SK-N-SH (cell line): ENCODE measurements at regions of chr11 and their contacts with region 1.

Region 1: DNA sequence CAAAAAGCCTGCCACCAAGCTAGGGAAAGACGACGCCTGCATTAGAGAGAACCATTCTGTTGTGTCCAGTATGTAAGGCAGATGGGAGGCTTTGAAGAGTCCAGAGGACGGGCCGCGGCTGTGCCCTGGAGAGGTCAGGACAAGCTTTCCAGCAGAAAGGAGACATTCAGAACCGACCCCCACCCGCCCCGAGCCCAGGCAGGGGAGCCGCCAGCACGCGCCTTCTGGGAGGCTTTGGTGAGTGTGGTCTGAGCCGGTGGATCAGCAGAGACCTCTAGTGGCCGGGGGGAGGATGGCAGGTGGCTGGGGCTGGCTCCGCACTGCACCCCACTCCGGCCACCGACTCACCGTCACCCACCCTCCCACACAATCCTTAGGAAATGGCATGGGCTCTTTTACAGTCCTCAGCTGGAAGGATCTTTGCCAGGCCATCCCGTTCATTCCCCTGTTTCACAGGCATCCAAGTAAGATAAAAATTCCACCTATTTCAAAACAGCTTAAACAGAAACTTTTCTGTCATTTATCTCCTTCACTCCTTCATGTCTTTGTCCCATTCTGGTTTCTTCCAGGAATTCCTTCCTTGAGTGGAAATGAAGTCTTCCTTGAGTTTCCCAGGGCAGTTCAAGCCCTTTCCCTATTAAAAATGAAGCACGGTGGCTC is 91.2 kb downstream of the FEZ1 start:
- DNase-seq: peak; percentile 91
- H3K4me3 ChIP-seq: peak overlapping the region in 1 of 2 experiments; percentile 19; a peak in 1 of 4 replicates
- H3K27ac ChIP-seq: no peak overlapping the region
- H3K4me1 ChIP-seq: peaks cover 0 to under 1% of the 10 kb centered on the region in 2 experiments; a peak in 1 of 4 replicates
- H3K27me3 ChIP-seq: peaks cover 43% of the 10 kb centered on the region; the same call in 1 of the 2 replicates
- CTCF ChIP-seq: peak; percentile 83
- EP300 ChIP-seq: no peak
- RAD21 ChIP-seq: peak; percentile 86

Region 2: DNA sequence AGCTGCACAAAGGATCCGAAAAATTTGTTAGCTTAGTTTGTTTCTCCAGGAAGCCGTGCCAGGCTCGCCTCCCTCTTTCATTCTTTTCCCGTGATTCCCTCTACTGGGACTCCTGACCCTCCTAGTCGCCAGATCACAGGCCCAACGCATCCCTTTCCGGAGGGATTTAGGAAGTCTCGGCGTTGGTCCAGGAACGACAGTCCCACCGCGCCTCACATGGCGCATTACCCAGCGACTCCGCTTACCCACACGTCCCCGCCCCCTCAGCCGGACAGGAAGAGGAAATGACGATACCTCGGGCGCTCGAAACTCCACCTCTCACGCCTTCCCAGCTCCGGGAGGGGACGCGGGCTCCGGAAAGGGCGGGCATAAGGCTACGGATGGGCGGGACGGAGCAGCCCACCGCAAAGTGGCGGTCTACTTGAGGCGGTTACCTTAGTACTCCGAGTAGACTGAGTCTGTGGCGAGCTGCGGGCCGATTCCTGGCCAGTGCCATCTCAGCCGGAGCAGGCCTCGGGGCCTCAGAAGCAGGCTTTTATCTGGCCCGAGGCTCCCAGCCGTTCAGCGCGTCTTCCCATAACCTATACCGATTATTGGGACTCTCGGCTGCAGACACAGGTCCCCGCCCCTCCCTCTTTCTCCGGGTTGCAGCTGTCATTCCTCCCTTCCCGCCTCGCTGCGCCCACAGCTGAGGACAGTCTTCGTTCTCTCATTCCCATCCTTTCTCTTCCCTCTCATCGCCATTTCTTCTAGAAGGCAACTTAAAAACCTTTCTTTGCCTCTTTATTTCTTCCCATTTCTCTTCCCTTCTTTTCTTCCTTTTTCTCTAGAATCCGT is 450.9 kb before region 1 on chr11 and contains the start of gene CCDC15:
- CTCF ChIA-PET with region 1: interaction called, 11 read pairs
- POLR2A ChIA-PET with region 1: no interaction called
- DNase-seq: peak; percentile 90
- H3K4me3 ChIP-seq: peak within 1 kb of the TSS; percentile 84 to 86
- H3K27ac ChIP-seq: peak within 1 kb of the TSS; percentile 84 to 97
- H3K4me1 ChIP-seq: peaks cover 6 to 7% of the 10 kb centered on the region in 2 experiments; a peak in 3 of 4 replicates
- H3K27me3 ChIP-seq: no peaks in the 10 kb centered on the region
- CTCF ChIP-seq: no peak
- EP300 ChIP-seq: no peak
- RAD21 ChIP-seq: no peak; the same call in 1 of the 2 replicates
- polyA plus RNA-seq, gene CCDC15: 0.69 and 0.91 TPM in 2 replicates

Region 3: DNA sequence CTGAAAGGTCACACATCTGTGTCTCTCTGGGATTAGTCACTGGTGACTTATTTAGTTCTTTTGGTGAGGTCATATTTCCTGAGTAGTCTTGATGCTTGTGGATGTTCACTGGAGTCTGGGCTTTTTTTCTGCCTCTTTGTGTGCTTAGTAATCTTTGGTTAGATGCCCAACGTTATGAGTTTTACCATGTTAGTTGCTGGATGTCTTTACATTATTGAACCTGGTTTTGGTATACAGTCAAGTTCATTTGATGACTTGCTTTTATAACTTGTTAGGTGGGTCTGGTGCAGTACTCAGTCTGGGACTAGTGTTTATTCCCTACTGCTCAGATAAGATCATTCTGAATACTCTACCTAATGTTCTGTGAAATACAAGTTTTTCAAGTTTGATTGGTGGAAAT is 368.0 kb before region 1 on chr11:
- CTCF ChIA-PET with region 1: no interaction called
- POLR2A ChIA-PET with region 1: no interaction called
- DNase-seq: no peak
- H3K4me3 ChIP-seq: no peak overlapping the region
- H3K27ac ChIP-seq: peak overlapping the region in 1 of 2 experiments; percentile 74; a peak in 2 of 4 replicates
- H3K4me1 ChIP-seq: 0 out of 4 replicates have a peak, but pooled peaks cover 0 to 4% of the 10 kb centered on the region in 2 experiments
- H3K27me3 ChIP-seq: no peaks in the 10 kb centered on the region
- CTCF ChIP-seq: no peak
- EP300 ChIP-seq: peak in 1 of 2 experiments; percentile 36; a peak in 1 of 4 replicates
- RAD21 ChIP-seq: no peak

Region 4: GRCh38 chr11:125141686-125142535 is 263.0 kb before region 1 on chr11:
- CTCF ChIA-PET with region 1: interaction called, 31 read pairs
- POLR2A ChIA-PET with region 1: no interaction called
- DNase-seq: peak; percentile 87
- H3K4me3 ChIP-seq: no peak overlapping the region; a peak in 1 of 4 replicates
- H3K27ac ChIP-seq: no peak overlapping the region
- H3K4me1 ChIP-seq: peaks cover 0 to 13% of the 10 kb centered on the region in 2 experiments; a peak in 1 of 4 replicates
- H3K27me3 ChIP-seq: no peaks in the 10 kb centered on the region
- CTCF ChIP-seq: peak; percentile 97
- EP300 ChIP-seq: no peak
- RAD21 ChIP-seq: peak; percentile 78

Region 5: GRCh38 chr11:125263268-125263790 is 141.6 kb before region 1 on chr11:
- CTCF ChIA-PET with region 1: no interaction called
- POLR2A ChIA-PET with region 1: no interaction called
- DNase-seq: peak; percentile 83
- H3K4me3 ChIP-seq: no peak overlapping the region
- H3K27ac ChIP-seq: no peak overlapping the region
- H3K4me1 ChIP-seq: peaks cover 0 to 14% of the 10 kb centered on the region in 2 experiments; a peak in 1 of 4 replicates
- H3K27me3 ChIP-seq: no peaks in the 10 kb centered on the region; the same call in 1 of the 2 replicates
- CTCF ChIP-seq: no peak
- EP300 ChIP-seq: no peak
- RAD21 ChIP-seq: no peak

Region 6: DNA sequence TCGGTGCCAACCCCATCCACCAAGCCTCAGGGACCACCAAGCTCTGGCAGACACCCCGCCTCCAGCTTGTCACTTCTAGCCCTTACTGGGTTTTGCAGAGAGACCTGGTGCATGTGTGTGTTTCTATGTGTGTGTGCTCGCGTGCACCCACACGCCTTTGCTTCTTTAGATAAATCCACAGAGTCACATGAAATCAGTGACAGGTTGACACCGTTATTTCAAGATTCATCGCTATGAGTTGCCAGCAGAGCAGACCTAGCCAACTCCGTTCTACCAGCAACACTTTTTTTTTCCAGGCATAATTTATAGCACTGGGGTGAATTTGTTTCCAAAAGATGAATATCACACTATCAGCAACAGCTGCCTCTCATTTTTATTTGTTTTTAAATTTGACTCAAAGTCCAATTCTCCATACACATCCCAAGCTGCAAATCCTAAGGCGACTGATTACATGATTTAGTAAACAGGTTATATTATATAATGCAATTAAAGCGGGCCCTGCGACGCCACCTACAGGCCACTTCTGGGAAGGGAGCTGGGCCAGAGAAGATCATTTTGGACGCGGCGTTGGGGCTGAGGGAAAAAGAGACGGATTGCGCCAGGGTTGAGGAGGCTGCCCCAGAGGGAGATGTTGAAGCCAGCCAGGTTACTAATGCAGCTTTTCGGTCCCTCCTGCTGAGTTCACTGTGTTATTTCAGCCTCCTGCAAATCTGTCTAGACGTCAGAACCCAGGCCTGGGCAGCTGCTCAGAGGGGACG is 59.3 kb before region 1 on chr11:
- CTCF ChIA-PET with region 1: interaction called, 100 read pairs
- POLR2A ChIA-PET with region 1: no interaction called
- DNase-seq: peak; percentile 84
- H3K4me3 ChIP-seq: no peak overlapping the region
- H3K27ac ChIP-seq: no peak overlapping the region
- H3K4me1 ChIP-seq: peaks cover 0 to 7% of the 10 kb centered on the region in 2 experiments; a peak in 1 of 4 replicates
- H3K27me3 ChIP-seq: no peaks in the 10 kb centered on the region
- CTCF ChIP-seq: peak; percentile 95
- EP300 ChIP-seq: peak in 1 of 2 experiments; percentile 20; a peak in 1 of 4 replicates
- RAD21 ChIP-seq: peak; percentile 69

Region 7: GRCh38 chr11:125364121-125364826 is 40.6 kb before region 1 on chr11:
- CTCF ChIA-PET with region 1: interaction called, 43 read pairs
- POLR2A ChIA-PET with region 1: no interaction called
- DNase-seq: no peak
- H3K4me3 ChIP-seq: no peak overlapping the region
- H3K27ac ChIP-seq: no peak overlapping the region
- H3K4me1 ChIP-seq: 0 out of 4 replicates have a peak, but pooled peaks cover 0 to 6% of the 10 kb centered on the region in 2 experiments
- H3K27me3 ChIP-seq: no peaks in the 10 kb centered on the region
- CTCF ChIP-seq: peak; percentile 14; the same call in 1 of the 2 replicates
- EP300 ChIP-seq: no peak
- RAD21 ChIP-seq: no peak

Region 8: DNA sequence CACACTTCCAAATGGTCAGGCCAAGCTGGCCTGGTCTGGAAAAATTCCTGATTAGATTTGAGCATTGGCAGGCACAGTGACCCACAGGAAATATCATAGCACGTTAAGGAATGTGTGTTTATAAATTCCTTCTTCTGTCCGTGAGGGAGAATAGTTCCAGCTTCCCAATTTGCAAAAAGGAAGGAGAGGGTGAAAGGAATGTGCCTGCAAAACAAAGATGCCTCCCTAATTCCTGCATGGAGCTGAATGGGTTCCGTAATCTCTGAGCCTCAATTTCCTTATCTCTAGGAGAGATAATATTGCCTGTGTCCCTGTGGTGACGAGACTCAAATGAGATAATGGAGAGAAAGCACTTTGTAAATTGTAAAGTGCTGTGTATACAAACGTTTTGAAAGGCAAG is 14.0 kb before region 1 on chr11:
- CTCF ChIA-PET with region 1: interaction called, 20 read pairs
- POLR2A ChIA-PET with region 1: no interaction called
- DNase-seq: peak; percentile 60
- H3K4me3 ChIP-seq: no peak overlapping the region
- H3K27ac ChIP-seq: no peak overlapping the region
- H3K4me1 ChIP-seq: peaks cover 0 to 6% of the 10 kb centered on the region in 2 experiments; a peak in 2 of 4 replicates
- H3K27me3 ChIP-seq: no peaks in the 10 kb centered on the region
- CTCF ChIP-seq: no peak
- EP300 ChIP-seq: no peak
- RAD21 ChIP-seq: no peak

Region 9: DNA sequence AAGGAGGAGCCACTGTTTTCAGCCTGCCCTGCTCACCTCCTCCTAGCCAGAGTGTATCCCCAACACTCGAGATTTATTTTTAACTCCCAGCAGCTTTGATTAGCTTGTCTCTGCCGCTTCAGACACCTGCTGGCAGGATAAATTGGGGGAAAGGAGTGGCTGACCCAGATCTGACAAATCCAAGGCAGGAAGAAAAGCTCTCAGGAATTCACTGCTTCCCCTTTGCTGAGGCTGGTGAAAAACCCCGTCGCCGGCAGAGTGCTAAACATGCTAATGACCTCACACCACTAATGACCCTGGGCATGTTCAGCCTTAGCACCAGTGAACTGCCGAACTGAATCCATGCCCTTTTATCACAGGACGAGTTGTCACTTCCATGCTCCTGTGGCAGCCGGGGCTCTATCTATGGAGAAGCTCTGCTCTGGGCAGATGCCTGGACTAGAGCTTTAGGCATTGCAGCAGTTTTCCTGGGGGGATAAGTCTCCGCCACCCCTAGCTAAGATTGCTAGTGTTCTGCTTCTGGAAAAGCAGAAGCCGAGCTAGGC is 38.9 kb after region 1 on chr11:
- CTCF ChIA-PET with region 1: interaction called, 11 read pairs
- POLR2A ChIA-PET with region 1: no interaction called
- DNase-seq: no peak
- H3K4me3 ChIP-seq: no peak overlapping the region
- H3K27ac ChIP-seq: no peak overlapping the region
- H3K4me1 ChIP-seq: peaks cover 0 to 14% of the 10 kb centered on the region in 2 experiments; a peak in 1 of 4 replicates
- H3K27me3 ChIP-seq: no peaks in the 10 kb centered on the region; the same call in 1 of the 2 replicates
- CTCF ChIP-seq: no peak
- EP300 ChIP-seq: no peak
- RAD21 ChIP-seq: no peak